Adrenal gland (tissue), 19 donors: ENCODE measurements at regions of chr11 and their contacts with region 1.

Region 1: DNA sequence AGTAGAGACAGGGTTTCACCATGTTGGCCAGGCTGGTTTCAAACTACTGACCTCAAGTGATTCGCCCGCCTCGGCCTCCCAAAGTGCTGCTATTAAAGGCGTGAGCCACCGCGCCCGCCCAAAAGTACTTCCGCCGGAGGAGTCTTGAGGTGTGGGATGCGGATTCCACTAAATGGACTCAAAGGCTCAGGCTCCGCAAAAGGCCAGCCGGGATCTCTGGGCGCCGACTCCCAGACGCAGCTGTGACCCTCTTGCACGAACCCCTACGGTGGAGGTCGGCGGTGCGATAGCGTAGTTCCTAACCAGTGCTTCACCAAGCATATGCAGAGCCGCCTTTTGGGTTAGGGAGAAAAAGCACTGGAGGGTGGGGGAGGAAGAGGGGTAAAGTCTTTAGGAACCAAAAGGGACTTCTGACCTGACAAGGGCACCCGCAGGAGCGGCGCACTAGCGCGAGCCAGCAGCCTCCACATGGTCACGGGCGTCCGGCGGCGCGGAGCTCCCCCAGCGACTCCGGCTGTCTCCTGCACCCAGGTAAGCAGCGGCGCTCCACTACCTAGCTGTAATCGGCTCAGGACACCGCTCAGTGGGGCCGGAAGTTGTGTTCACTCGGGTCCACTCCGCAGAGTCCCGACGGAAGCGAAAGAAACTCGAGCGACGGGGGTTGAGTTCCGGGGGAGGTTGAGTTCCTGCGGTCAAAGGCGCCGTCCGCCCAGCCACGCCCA is at the start of gene MRPL16:
- DNase-seq: peak; percentile 83 to 95 (median 89)
- H3K4me3 ChIP-seq: peak within 1 kb of the TSS in 3 of 4 donors; percentile 81 to 92 (median 82)
- H3K27ac ChIP-seq: peak within 1 kb of the TSS in 4 of 5 donors; percentile 70 to 87 (median 76)
- H3K4me1 ChIP-seq: peaks cover 4 to 12% of the 10 kb centered on the region in 2 donors
- H3K27me3 ChIP-seq: no peaks in the 10 kb centered on the region
- CTCF ChIP-seq: peak in 3 of 6 experiments; percentile 12 to 33 (median 16)
- POLR2A ChIP-seq: peak in 1 of 2 donors; percentile 62
- total RNA-seq, gene MRPL16: 47.5 to 101 (median 73.8) TPM

Region 2: DNA sequence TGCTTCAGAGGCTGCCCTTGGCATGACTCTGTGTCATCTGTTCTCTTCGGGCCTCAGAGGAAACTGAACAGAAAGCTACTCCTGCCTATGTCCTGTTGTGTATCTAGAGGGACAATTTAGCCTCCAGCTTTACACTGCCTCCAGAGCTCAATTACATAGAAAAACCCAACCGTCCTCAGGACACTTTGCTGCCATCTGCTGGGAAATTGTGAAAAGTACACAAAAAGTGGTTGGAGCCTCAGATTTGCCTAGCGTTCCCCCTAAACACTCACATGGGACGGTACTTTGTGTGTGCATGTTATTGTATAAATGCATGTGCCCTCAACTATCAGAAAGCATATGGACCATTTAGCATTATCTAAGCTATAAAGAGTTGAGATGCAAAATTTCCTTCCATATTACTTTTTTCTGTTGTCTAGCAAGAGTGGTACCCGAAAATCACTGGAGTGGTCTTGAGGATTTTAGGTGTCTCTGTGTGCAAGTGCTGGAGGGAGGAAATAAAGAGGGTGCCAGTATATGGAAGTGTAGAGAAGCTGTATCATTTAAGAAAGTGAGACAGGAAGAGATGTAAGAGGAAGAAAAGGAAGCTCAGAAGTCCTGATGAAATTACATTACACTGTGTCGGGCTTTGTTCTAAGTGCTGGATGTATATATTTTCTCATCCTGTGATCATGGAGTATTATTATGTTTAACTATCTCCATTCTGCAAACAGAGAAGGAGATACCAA is 441.3 kb after region 1 on chr11:
- intact Hi-C with region 1: loop called in 1 of 2 experiments (anchors 10 kb)
- DNase-seq: peak in 5 of 7 donors; percentile 17 to 59 (median 38)
- H3K4me3 ChIP-seq: no peak overlapping the region
- H3K27ac ChIP-seq: peak overlapping the region in 1 of 5 donors; percentile 51
- H3K4me1 ChIP-seq: peaks cover 0 to 7% of the 10 kb centered on the region in 2 donors
- H3K27me3 ChIP-seq: peaks cover 4% of the 10 kb centered on the region
- CTCF ChIP-seq: peak; percentile 41 to 70 (median 58)
- POLR2A ChIP-seq: no peak